Colonic mucosa (tissue), 4 donors: ENCODE measurements at regions of chr5 and their contacts with region 1.

Region 1: GRCh38 chr5:149434162-149435014 is 55.3 kb upstream of the IL17B start:
- DNase-seq: peak; percentile 68
- H3K4me3 ChIP-seq: no peak overlapping the region
- H3K27ac ChIP-seq: no peak overlapping the region
- H3K4me1 ChIP-seq: peaks cover 4% of the 10 kb centered on the region
- H3K27me3 ChIP-seq: no peaks in the 10 kb centered on the region
- CTCF ChIP-seq: peak; percentile 83

Region 2: DNA sequence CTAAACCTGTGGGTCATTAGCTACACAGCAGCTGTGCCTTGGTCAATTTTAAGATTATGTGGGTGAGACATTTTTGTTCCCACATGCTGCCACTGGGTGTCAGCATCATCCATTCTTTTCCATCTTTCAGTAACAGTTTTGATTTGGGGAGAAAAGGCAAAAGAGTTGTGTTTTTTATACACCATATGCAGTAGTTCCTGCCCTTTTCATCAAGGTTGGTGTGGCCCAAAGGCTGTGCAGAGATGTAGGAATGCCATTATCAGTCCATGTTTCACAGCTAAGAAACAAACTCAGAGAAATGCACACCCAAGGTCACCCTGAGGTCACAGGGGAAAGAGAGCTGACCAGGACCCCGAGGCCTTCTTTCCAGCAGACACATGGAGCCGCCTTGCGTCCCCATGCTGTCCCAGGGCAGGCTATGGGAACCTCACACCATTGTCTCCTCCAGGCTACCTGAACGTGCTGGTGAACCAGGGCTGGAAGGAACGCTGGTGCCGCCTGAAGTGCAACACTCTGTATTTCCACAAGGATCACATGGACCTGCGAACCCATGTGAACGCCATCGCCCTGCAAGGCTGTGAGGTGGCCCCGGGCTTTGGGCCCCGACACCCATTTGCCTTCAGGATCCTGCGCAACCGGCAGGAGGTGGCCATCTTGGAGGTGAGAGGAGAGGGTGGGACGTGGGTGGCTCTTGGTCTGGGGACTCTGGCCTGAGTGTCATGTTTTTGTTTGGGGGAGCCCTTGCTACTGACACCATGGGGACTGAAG is 116.9 kb before region 1 on chr5:
- intact Hi-C with region 1: loop called (anchors 5 kb)
- DNase-seq: peak; percentile 41
- H3K4me3 ChIP-seq: no peak overlapping the region
- H3K27ac ChIP-seq: no peak overlapping the region
- H3K4me1 ChIP-seq: peaks cover 10% of the 10 kb centered on the region
- H3K27me3 ChIP-seq: no peaks in the 10 kb centered on the region
- CTCF ChIP-seq: peak; percentile 75

Region 3: GRCh38 chr5:149381987-149382340 is 52.4 kb before region 1 on chr5:
- intact Hi-C with region 1: loop called (anchors 2 kb)
- DNase-seq: peak; percentile 81
- H3K4me3 ChIP-seq: no peak overlapping the region
- H3K27ac ChIP-seq: peak overlapping the region; percentile 41
- H3K4me1 ChIP-seq: no peaks in the 10 kb centered on the region
- H3K27me3 ChIP-seq: no peaks in the 10 kb centered on the region
- CTCF ChIP-seq: peak; percentile 83